ENCODE measurements at regions of chr7 and their contacts with region 1.

Region 1: DNA sequence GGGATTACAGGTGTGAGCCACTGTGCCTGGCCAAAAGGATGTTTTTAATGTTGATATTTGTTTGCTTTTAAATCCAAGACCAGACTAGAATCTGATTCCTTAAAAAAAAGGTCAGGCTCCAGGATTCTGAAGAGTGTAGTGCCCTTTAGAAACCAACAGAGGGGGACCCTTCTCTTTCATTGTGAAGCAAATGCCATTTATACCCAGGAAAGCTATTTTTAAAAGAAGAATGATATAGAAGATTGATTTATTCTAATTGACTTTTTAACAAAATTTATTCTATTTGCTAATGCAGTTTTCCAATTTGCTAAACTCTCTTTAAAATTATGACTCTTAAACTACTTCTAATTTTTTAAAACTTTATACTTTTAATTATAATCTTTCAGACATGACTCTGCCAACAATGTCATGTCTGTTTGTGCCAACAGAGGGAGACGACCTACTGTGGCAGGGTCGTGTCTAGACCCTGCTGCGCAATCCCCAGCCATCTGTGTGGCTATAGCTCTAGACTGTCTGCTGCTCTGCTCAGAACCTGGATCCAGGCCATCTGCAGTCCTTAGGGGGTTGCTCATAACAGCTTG is 201.0 kb upstream of the IMMP2L start:
- DNase-seq: no peak
- ATAC-seq: peak in 2 of 4 donors; percentile 47 to 67
- H3K4me3 ChIP-seq: no peak overlapping the region
- H3K27ac ChIP-seq: no peak overlapping the region
- H3K4me1 ChIP-seq: peaks cover 0 to 10% (median 0%) of the 10 kb centered on the region in 12 donors
- H3K27me3 ChIP-seq: no peaks in the 10 kb centered on the region
- CTCF ChIP-seq: peak; percentile 35 to 72 (median 60)
- POLR2A ChIP-seq: no peak

Region 2: GRCh38 chr7:111803015-111803758 is 39.9 kb after region 1 on chr7:
- intact Hi-C with region 1: no loop called
- DNase-seq: no peak
- ATAC-seq: peak; percentile 41 to 67 (median 53)
- H3K4me3 ChIP-seq: no peak overlapping the region
- H3K27ac ChIP-seq: peak overlapping the region in 6 of 12 donors; percentile 3 to 39 (median 9)
- H3K4me1 ChIP-seq: peaks cover 0 to 19% (median 2%) of the 10 kb centered on the region in 12 donors
- H3K27me3 ChIP-seq: no peaks in the 10 kb centered on the region
- CTCF ChIP-seq: no peak
- POLR2A ChIP-seq: no peak

Region 3: GRCh38 chr7:111841596-111842205 is 78.4 kb after region 1 on chr7:
- intact Hi-C with region 1: loop called in 1 of 10 experiments (anchors 10 kb)
- DNase-seq: no peak
- ATAC-seq: no peak
- H3K4me3 ChIP-seq: no peak overlapping the region
- H3K27ac ChIP-seq: no peak overlapping the region
- H3K4me1 ChIP-seq: no peaks in the 10 kb centered on the region
- H3K27me3 ChIP-seq: no peaks in the 10 kb centered on the region
- CTCF ChIP-seq: no peak
- POLR2A ChIP-seq: no peak

Region 4: DNA sequence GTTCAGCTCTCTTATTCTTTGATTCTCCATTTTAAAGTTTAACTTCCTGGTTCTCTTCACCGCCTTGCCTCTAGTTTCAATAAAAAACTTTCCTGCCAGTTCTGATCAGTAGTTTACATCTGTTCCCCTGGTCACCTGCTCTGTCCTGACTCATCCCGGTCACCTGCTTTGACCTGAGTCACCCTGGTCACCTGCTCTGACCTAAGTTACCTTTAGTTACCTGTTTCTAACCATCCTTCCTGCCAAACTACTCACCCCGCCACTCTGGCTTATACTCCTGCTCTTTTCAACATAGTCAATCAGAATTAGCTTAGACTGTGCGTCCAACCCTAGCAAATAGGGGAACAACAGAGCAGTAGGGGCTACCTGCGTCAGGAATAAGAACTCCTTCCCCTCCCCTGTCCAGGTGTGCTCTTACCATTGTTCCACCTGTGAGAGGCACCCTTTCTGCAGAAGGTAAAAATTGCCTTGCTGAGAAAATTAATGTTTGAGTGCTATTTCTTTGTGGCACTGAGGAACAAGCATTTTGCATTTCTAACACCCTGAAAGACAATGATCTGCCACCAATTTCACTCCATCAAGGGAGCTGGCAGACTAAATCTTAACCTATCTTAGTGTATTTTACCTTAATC is 179.3 kb after region 1 on chr7:
- intact Hi-C with region 1: loop called in 1 of 10 experiments (anchors 10 kb)
- DNase-seq: no peak
- ATAC-seq: no peak
- H3K4me3 ChIP-seq: no peak overlapping the region
- H3K27ac ChIP-seq: no peak overlapping the region
- H3K4me1 ChIP-seq: no peaks in the 10 kb centered on the region
- H3K27me3 ChIP-seq: no peaks in the 10 kb centered on the region
- CTCF ChIP-seq: no peak
- POLR2A ChIP-seq: no peak

Region 5: GRCh38 chr7:111975346-111975745 is 212.0 kb after region 1 on chr7:
- intact Hi-C with region 1: no loop called
- DNase-seq: no peak
- ATAC-seq: no peak
- H3K4me3 ChIP-seq: no peak overlapping the region
- H3K27ac ChIP-seq: no peak overlapping the region
- H3K4me1 ChIP-seq: peaks cover 0 to 17% (median 5%) of the 10 kb centered on the region in 12 donors
- H3K27me3 ChIP-seq: no peaks in the 10 kb centered on the region
- CTCF ChIP-seq: no peak
- POLR2A ChIP-seq: no peak